T-cell (primary cell): ENCODE measurements at regions of chr6 and their contacts with region 1.

Region 1: GRCh38 chr6:21987501-21987957 is 309.3 kb downstream of the PRL start:
- DNase-seq: peak in 8 of 35 experiments; percentile 1 to 12 (median 7)
- ATAC-seq: peak in 2 of 4 experiments; percentile 26 to 40
- H3K4me3 ChIP-seq: peak overlapping the region in 1 of 2 donors; percentile 44
- H3K4me3 Mint-ChIP-seq: peak overlapping the region in 2 of 3 donors; percentile 6 to 54
- H3K27ac ChIP-seq: no peak overlapping the region
- H3K27ac Mint-ChIP-seq: no peak overlapping the region
- H3K4me1 ChIP-seq: peaks cover 4 to 27% of the 10 kb centered on the region in 2 experiments
- H3K4me1 Mint-ChIP-seq: peaks cover 12 to 22% (median 13%) of the 10 kb centered on the region in 3 donors
- H3K27me3 ChIP-seq: no peaks in the 10 kb centered on the region
- H3K27me3 Mint-ChIP-seq: peaks cover 0 to 8% of the 10 kb centered on the region in 2 donors

Region 2: DNA sequence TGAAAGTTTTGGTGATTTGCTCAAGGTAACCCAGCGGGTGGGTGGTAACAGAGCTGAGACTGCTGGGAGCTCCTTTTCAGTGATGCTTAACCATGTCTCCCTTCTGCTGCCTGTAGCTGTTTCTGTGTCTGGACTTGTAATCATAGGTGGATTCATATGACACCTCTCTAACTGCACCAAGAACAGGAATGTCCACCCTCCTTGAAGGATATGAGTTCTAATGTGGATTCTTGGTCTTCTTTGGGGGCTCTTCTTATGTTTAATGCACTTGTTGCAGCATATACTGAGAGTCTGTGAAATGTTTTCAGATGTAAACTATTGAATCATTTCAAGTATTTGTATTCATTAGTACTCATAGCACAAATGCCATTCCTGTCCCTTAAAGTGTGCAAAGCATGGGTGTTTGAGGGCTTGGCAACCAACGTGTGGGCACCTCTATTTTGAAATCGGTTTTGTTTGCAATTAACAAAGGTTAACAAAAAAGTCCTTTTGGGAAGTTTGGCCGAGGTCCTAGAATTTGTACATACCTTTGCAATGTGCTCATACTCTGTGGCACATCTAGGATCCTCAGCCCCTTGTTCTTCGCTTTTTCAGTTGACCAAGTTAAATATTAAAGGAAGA is 256.0 kb before region 1 on chr6:
- CTCF ChIA-PET with region 1: no interaction called
- POLR2A ChIA-PET with region 1: no interaction called
- DNase-seq: no peak
- ATAC-seq: no peak
- H3K4me3 ChIP-seq: no peak overlapping the region
- H3K4me3 Mint-ChIP-seq: no peak overlapping the region
- H3K27ac ChIP-seq: no peak overlapping the region
- H3K27ac Mint-ChIP-seq: no peak overlapping the region
- H3K4me1 ChIP-seq: no peaks in the 10 kb centered on the region
- H3K4me1 Mint-ChIP-seq: no peaks in the 10 kb centered on the region
- H3K27me3 ChIP-seq: no peaks in the 10 kb centered on the region
- H3K27me3 Mint-ChIP-seq: peaks cover 0 to 4% of the 10 kb centered on the region in 2 donors

Region 3: GRCh38 chr6:22526736-22527135 is 539.2 kb after region 1 on chr6:
- CTCF ChIA-PET with region 1: no interaction called
- POLR2A ChIA-PET with region 1: interaction called in 1 of 2 experiments, 10 read pairs
- DNase-seq: no peak
- ATAC-seq: no peak
- H3K4me3 ChIP-seq: no peak overlapping the region
- H3K4me3 Mint-ChIP-seq: no peak overlapping the region
- H3K27ac ChIP-seq: no peak overlapping the region
- H3K27ac Mint-ChIP-seq: no peak overlapping the region
- H3K4me1 ChIP-seq: no peaks in the 10 kb centered on the region
- H3K4me1 Mint-ChIP-seq: no peaks in the 10 kb centered on the region
- H3K27me3 ChIP-seq: no peaks in the 10 kb centered on the region
- H3K27me3 Mint-ChIP-seq: no peaks in the 10 kb centered on the region